ENCODE measurements at regions of chr6 and their contacts with region 1.

Region 1: GRCh38 chr6:110053395-110054240 is 75.5 kb downstream of the GPR6 start:
- DNase-seq: peak; percentile 28
- ATAC-seq: peak; percentile 80
- H3K4me3 ChIP-seq: no peak overlapping the region
- H3K27ac ChIP-seq: no peak overlapping the region
- H3K4me1 ChIP-seq: no peaks in the 10 kb centered on the region
- H3K27me3 ChIP-seq: peaks cover 65% of the 10 kb centered on the region
- CTCF ChIP-seq: peak; percentile 90

Region 2: DNA sequence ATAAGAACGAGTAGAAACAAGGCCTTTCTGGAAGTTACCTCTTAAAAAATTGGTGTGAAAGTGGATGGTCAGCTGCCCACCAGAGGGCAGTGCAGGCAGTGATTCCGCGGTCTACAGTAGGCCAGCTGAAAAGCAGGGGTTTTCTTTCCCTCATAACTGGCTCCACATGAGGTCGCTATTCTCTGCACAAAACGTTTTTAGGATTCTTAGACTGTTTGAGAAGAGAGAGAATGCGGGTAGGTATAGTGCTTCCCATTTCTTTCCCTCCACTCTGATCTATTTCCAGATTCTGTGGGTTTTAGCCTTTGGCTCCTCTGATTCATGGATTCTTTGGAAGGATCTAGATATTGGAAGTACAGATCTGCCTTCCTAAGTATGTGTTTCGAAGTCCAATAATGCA is 348.4 kb before region 1 on chr6:
- CTCF ChIA-PET with region 1: no interaction called
- POLR2A ChIA-PET with region 1: no interaction called
- in situ Hi-C with region 1: loop called (anchors 25 kb)
- intact Hi-C with region 1: no loop called
- DNase-seq: peak; percentile 90
- ATAC-seq: peak; percentile 97
- H3K4me3 ChIP-seq: no peak overlapping the region
- H3K27ac ChIP-seq: no peak overlapping the region
- H3K4me1 ChIP-seq: no peaks in the 10 kb centered on the region
- H3K27me3 ChIP-seq: no peaks in the 10 kb centered on the region
- CTCF ChIP-seq: peak; percentile 100